ENCODE measurements at regions of chr16 and their contacts with region 1.

Region 1: GRCh38 chr16:58755989-58756649 is 22.0 kb upstream of the GOT2 start:
- DNase-seq: peak; percentile 91
- ATAC-seq: peak; percentile 99
- H3K4me3 Mint-ChIP-seq: peak overlapping the region; percentile 26
- H3K27ac Mint-ChIP-seq: peak overlapping the region; percentile 57
- H3K4me1 Mint-ChIP-seq: peaks cover 8% of the 10 kb centered on the region
- H3K27me3 Mint-ChIP-seq: no peaks in the 10 kb centered on the region
- CTCF ChIP-seq: peak; percentile 75

Region 2: GRCh38 chr16:58487566-58488351 is 268.4 kb before region 1 on chr16:
- CTCF ChIA-PET with region 1: interaction called, 16 read pairs
- POLR2A ChIA-PET with region 1: no interaction called
- intact Hi-C with region 1: no loop called
- DNase-seq: peak; percentile 84
- ATAC-seq: peak; percentile 93
- H3K4me3 Mint-ChIP-seq: no peak overlapping the region
- H3K27ac Mint-ChIP-seq: no peak overlapping the region
- H3K4me1 Mint-ChIP-seq: no peaks in the 10 kb centered on the region
- H3K27me3 Mint-ChIP-seq: peaks cover 2% of the 10 kb centered on the region
- CTCF ChIP-seq: peak; percentile 93

Region 3: GRCh38 chr16:58678716-58679115 is 77.4 kb before region 1 on chr16:
- CTCF ChIA-PET with region 1: interaction called, 15 read pairs
- POLR2A ChIA-PET with region 1: no interaction called
- intact Hi-C with region 1: no loop called
- DNase-seq: peak; percentile 24
- ATAC-seq: peak; percentile 47
- H3K4me3 Mint-ChIP-seq: no peak overlapping the region
- H3K27ac Mint-ChIP-seq: no peak overlapping the region
- H3K4me1 Mint-ChIP-seq: peaks cover 8% of the 10 kb centered on the region
- H3K27me3 Mint-ChIP-seq: no peaks in the 10 kb centered on the region
- CTCF ChIP-seq: no peak

Region 4: DNA sequence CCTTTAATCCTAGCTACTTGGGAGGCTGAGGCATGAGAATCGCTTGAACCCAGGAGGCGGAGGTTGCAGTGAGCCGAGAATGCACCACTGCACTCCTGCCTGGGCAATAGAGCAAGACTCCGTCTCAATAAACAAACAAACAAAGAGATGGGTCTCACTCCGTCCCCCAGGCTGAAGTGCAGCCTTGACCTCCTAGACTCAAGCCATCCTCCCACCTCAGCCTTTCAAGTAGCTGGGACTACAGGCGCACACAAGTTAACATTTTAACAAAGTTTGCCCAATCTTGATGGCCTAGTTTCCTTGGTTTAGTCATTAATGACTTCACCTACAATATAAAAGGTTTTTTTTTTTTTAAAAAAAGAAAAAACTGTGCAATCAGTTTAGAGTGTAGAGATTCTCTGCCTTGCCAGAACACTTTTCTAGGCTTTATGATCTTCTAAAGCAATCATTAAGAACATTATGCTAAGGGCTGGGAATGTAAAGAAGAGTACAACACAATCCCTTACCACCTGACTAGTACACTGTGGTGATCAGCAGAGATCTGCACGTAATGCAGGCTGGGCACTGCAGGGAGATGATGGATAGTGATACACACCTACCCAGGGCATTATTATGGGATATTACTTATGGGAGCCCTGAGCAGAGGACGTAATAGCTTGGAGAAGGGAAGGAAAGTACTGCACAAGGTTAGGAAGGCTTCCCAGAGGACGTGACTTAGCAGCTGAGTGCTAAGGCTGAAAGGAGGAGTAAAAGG is 28.9 kb before region 1 on chr16:
- CTCF ChIA-PET with region 1: interaction called, 32 read pairs
- POLR2A ChIA-PET with region 1: interaction called, 4 read pairs
- intact Hi-C with region 1: no loop called
- DNase-seq: no peak
- ATAC-seq: no peak
- H3K4me3 Mint-ChIP-seq: no peak overlapping the region
- H3K27ac Mint-ChIP-seq: no peak overlapping the region
- H3K4me1 Mint-ChIP-seq: peaks cover 32% of the 10 kb centered on the region
- H3K27me3 Mint-ChIP-seq: no peaks in the 10 kb centered on the region
- CTCF ChIP-seq: no peak

Region 5: DNA sequence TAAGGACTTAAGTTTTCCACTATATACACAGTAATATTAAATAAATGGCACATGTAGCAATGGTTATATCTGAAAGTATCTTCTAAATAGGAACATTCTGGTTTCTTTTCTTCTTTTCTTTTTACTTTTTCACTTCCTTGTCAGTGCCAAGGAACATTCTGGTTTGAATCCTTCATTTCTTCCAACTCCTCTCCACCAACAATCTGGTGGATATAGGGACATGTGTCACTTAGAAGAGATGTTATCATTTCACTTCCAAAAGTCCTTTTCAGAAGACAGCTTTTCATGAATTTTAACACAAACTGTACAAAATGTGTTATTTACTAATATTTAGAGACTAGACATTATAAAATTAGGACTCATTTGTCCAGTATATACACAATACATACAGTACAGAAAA is 14.1 kb before region 1 on chr16:
- CTCF ChIA-PET with region 1: interaction called, 10 read pairs
- POLR2A ChIA-PET with region 1: no interaction called
- intact Hi-C with region 1: no loop called
- DNase-seq: no peak
- ATAC-seq: no peak
- H3K4me3 Mint-ChIP-seq: no peak overlapping the region
- H3K27ac Mint-ChIP-seq: no peak overlapping the region
- H3K4me1 Mint-ChIP-seq: no peaks in the 10 kb centered on the region
- H3K27me3 Mint-ChIP-seq: peaks cover 4% of the 10 kb centered on the region
- CTCF ChIP-seq: no peak

Measured in activated CD8-positive, alpha-beta T cell treated with anti-CD3 and anti-CD28 coated beads for 36 hours (primary cell).